A673 (cell line): ENCODE measurements at regions of chr7 and their contacts with region 1.

Region 1: DNA sequence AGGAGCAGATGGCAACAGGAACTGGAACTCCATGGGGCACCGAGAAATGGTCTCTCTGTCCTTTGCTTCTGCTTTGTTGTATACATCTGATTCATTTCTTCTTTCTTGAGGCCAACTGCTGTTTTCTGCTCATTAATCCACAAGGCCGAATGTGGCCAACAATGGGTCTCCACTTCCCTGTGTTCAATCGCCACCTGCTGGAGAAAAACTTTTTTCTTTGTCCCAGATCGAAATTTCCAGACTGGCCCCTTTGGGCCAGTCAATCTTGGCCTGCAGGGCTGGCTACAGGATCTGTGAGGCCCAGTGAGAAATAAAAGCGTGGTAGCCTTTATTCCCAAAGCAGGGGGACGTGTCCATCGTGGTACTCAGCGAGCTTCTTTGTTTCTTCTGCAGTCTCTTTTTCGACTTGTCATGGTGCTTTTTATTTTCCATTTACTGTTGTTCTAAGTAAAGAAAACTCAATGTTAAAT is 58.8 kb downstream of the PARP12 start:
- DNase-seq: peak; percentile 65
- H3K4me3 ChIP-seq: no peak overlapping the region
- H3K27ac ChIP-seq: no peak overlapping the region
- H3K4me1 ChIP-seq: no peaks in the 10 kb centered on the region
- H3K27me3 ChIP-seq: no peaks in the 10 kb centered on the region
- CTCF ChIP-seq: peak; percentile 64

Region 2: GRCh38 chr7:139431010-139431409 is 572.9 kb before region 1 on chr7:
- CTCF ChIA-PET with region 1: no interaction called
- POLR2A ChIA-PET with region 1: no interaction called
- intact Hi-C with region 1: loop called (anchors 5 kb)
- DNase-seq: no peak
- H3K4me3 ChIP-seq: no peak overlapping the region
- H3K27ac ChIP-seq: no peak overlapping the region
- H3K4me1 ChIP-seq: no peaks in the 10 kb centered on the region
- H3K27me3 ChIP-seq: no peaks in the 10 kb centered on the region
- CTCF ChIP-seq: no peak

Region 3: DNA sequence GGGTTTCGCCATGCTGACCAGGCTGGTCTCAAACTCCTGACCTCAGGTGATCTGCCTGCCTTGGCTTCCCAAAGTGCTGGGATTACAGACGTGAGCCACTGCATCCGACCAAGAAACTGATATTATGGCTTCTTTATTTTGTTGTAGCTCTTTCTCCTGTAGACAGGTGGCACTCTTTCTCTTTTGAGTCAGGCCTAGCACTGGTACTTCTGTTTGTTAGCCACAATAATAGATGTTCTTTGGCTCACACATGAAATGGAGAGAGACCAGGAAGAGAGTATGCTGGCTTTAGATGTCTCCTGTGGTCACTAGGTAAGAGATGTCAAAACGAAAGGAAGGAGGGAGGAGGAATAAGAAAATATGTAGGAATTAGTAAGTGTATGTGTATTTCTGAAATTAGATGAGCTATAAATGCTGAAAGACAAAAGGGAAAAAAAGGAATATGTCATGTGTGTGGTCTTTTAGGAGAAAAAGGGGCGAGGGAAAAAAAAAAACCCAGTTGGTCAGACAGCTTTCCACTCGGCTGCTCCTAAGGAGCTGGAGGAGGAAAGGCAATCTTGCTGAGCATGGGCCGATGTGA is 401.7 kb before region 1 on chr7:
- CTCF ChIA-PET with region 1: interaction called, 4 read pairs
- POLR2A ChIA-PET with region 1: no interaction called
- intact Hi-C with region 1: loop called (anchors 5 kb)
- DNase-seq: peak; percentile 48
- H3K4me3 ChIP-seq: no peak overlapping the region
- H3K27ac ChIP-seq: no peak overlapping the region
- H3K4me1 ChIP-seq: peaks cover 7% of the 10 kb centered on the region
- H3K27me3 ChIP-seq: no peaks in the 10 kb centered on the region
- CTCF ChIP-seq: peak; percentile 68

Region 4: DNA sequence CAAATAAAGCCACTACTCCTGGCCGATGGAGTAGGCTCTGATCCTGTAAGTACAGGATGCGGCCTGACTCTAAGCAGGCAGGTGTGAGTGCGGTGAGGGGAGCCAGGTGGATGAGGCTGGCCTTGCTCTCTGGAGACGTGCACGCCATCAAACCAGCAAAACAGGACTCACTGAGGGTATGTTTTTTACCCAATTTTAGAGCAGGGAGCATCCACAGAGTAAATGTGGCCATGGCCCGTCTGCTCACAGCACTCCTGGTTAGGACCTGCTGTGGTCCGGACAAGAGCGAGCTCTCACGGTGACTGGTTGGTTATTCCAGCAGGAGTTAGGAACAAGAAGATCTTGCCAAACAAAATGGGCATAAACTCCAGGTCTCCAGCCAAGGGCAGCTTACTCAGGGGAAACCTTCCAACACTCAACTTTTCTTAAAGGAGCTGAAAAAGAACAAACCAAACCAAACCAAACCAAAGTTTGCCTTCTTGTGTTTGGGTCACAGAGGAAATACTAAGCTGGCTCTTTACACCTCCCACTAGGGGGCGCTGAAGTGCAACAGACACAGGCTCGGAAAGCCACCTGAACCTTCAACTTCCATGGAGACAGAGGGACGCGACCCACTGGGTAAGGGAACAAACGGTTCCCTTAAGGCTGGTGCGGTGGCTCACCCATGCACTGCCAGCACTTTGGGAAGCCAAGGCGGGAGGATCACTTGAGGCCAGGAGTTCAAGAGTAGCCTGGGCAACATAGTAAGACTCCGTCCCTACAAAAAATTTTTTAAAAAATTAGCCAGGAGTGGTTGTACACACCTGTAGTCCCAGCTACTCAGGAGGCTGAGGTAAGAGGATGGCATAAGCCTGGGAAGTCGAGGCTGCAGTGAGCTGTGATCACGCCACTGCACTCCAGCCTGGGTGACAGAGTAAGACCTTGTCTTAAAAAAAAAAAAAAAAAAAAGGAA is 358.1 kb before region 1 on chr7:
- CTCF ChIA-PET with region 1: interaction called, 12 read pairs
- POLR2A ChIA-PET with region 1: no interaction called
- intact Hi-C with region 1: loop called (anchors 1 kb)
- DNase-seq: peak; percentile 87
- H3K4me3 ChIP-seq: no peak overlapping the region
- H3K27ac ChIP-seq: no peak overlapping the region
- H3K4me1 ChIP-seq: no peaks in the 10 kb centered on the region
- H3K27me3 ChIP-seq: no peaks in the 10 kb centered on the region
- CTCF ChIP-seq: peak; percentile 89

Region 5: DNA sequence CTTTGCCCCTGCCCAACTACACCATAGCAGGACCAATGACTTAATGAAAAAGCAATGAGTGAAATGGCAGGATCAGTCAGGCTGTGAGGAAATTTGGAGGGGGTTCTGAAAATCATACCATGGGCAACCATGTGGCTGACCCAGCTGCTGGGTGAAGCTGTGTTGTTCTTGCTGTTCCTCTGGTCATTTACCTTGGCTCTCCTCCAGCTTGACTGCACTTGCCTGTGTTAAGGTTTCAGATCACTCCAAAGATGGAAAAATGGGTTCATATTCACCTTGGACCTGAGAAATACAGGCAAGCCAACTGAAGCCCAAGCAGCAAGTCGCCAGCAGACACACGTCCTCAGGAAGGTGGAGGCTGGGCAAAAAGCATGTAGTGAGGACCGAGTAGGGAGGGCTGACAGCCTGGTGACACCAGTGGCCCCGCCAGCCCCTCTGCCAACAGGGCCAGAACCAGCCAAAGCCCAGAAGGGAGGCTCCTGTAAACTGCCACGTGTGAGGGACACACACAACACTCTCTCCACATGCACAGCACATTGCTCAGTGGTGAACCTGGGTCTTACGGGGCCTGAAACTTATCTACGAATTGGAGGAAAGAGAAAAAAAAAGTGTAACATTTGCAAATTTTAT is 18.7 kb after region 1 on chr7:
- CTCF ChIA-PET with region 1: no interaction called
- POLR2A ChIA-PET with region 1: no interaction called
- intact Hi-C with region 1: no loop called
- DNase-seq: no peak
- H3K4me3 ChIP-seq: no peak overlapping the region
- H3K27ac ChIP-seq: no peak overlapping the region
- H3K4me1 ChIP-seq: no peaks in the 10 kb centered on the region
- H3K27me3 ChIP-seq: no peaks in the 10 kb centered on the region
- CTCF ChIP-seq: no peak

Region 6: DNA sequence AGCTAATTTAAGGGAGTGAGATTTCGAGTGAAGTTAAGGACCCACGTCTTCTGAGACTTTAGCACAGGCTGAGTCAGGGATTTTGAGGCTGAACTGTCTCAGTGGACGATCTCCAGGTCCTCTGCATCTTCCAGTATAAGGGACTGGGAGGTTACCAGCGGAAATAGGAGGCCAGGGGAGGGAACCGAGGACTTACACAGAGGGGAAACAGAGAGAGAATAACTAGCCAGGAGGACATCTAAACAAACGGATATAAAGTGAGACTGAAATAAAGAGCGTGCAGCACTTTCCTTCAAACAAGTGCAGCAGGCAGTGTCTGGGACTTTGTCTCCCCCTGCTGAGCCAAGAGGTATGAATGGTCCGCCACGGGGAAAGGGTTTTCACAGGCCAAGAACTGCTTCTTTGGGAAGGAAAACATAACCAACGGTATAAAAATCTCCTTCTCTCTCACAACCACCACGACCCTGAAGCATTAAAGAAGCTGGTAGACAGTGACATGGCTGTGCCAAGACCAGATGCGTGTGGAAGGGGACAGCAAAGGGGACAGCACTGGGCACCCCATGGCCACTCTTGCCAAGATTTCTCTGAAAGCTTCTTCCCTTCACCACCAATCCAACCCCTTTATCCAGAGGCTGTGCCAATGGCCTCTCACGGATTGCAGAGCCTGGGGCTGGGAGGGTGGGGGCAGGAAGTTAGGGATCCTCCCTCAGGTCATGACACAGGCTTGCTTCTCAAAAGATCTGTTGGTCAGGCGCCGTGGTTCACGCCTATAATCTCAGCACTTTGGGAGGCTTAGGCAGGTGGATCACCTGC is 322.4 kb after region 1 on chr7:
- CTCF ChIA-PET with region 1: no interaction called
- POLR2A ChIA-PET with region 1: no interaction called
- intact Hi-C with region 1: loop called (anchors 10 kb)
- DNase-seq: peak; percentile 74
- H3K4me3 ChIP-seq: peak overlapping the region; percentile 14
- H3K27ac ChIP-seq: no peak overlapping the region
- H3K4me1 ChIP-seq: no peaks in the 10 kb centered on the region
- H3K27me3 ChIP-seq: no peaks in the 10 kb centered on the region
- CTCF ChIP-seq: peak; percentile 68